Activated T-helper 1 cell treated with anti-CD3 and anti-CD28 coated beads, Interleukin-12 subunit alpha, Interleukin-12 subunit beta, Interleukin-2, Interleukin-4 antibody, amounts not matched to agents 30 ng/mL and 10 ng/mL and 1 ng/mL, durations not matched to agents 14 hours and 24 hours and 36 hours (primary cell): ENCODE measurements at regions of chr9 and their contacts with region 1.

Region 1: GRCh38 chr9:70413798-70414775 is at the start of gene KLF9:
- DNase-seq: peak; percentile 91
- H3K4me3 Mint-ChIP-seq: peak within 1 kb of the TSS; percentile 98
- H3K27ac Mint-ChIP-seq: peak within 1 kb of the TSS; percentile 100
- H3K4me1 Mint-ChIP-seq: peaks cover 42% of the 10 kb centered on the region
- H3K27me3 Mint-ChIP-seq: no peaks in the 10 kb centered on the region
- total RNA-seq, gene KLF9: 18.1 and 19.0 TPM in 2 replicates

Region 2: GRCh38 chr9:69174616-69175463 is 1239.2 kb before region 1 on chr9:
- intact Hi-C with region 1: loop called (anchors 5 kb)
- DNase-seq: peak; percentile 21
- H3K4me3 Mint-ChIP-seq: peak overlapping the region; percentile 82
- H3K27ac Mint-ChIP-seq: peak overlapping the region; percentile 69
- H3K4me1 Mint-ChIP-seq: peaks cover 70% of the 10 kb centered on the region
- H3K27me3 Mint-ChIP-seq: peaks cover 18% of the 10 kb centered on the region

Region 3: GRCh38 chr9:70020991-70021571 is 393.0 kb before region 1 on chr9:
- intact Hi-C with region 1: no loop called
- DNase-seq: no peak
- H3K4me3 Mint-ChIP-seq: no peak overlapping the region
- H3K27ac Mint-ChIP-seq: no peak overlapping the region
- H3K4me1 Mint-ChIP-seq: no peaks in the 10 kb centered on the region
- H3K27me3 Mint-ChIP-seq: peaks cover 3% of the 10 kb centered on the region

Region 4: DNA sequence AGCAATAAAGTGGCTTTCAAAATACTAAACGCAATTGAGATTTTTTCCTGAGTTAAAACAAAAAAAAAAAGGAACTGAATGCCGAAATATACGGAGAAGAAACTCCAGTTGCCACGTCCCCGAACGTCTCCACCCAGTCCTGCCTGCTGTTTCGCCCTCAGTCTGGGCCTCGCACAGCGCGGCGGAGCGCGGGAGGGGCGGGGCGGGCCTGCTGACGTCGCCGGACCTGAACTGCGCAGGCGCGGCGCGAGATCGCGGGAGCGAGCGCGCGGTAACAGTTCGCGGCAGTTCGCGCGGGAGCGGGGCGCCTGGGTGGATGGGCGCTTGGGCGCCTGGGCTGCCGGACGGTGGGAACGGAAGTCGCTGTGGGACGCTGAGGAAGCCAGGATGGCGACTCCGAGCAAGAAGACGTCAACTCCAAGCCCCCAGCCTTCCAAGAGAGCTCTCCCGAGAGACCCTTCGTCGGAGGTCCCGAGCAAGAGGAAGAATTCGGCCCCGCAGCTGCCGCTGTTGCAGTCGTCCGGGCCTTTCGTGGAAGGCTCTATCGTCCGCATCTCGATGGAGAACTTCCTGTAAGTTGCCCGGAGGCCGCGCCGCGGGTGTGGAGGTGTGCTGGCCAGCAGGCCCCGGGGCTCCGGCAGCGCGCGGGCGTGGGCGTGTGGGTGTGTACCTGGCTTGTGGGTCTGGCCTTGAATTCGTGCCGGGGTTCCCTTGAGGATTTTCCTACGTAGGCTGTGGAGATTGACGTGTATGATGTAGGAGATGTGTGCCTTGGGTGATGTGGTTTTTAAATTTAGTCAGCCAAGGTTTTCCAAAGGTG is 155.2 kb before region 1 on chr9 and contains the start of gene SMC5:
- intact Hi-C with region 1: loop called (anchors 1 kb)
- DNase-seq: peak; percentile 90
- H3K4me3 Mint-ChIP-seq: peak within 1 kb of the TSS; percentile 99
- H3K27ac Mint-ChIP-seq: peak within 1 kb of the TSS; percentile 95
- H3K4me1 Mint-ChIP-seq: peaks cover 49% of the 10 kb centered on the region
- H3K27me3 Mint-ChIP-seq: peaks cover 7% of the 10 kb centered on the region
- total RNA-seq, gene SMC5: 49.5 and 53.6 TPM in 2 replicates

Region 5: GRCh38 chr9:70466976-70467561 is 53.0 kb after region 1 on chr9:
- intact Hi-C with region 1: loop called (anchors 2 kb)
- DNase-seq: no peak
- H3K4me3 Mint-ChIP-seq: no peak overlapping the region
- H3K27ac Mint-ChIP-seq: peak overlapping the region; percentile 47
- H3K4me1 Mint-ChIP-seq: peaks cover 48% of the 10 kb centered on the region
- H3K27me3 Mint-ChIP-seq: no peaks in the 10 kb centered on the region

Region 6: DNA sequence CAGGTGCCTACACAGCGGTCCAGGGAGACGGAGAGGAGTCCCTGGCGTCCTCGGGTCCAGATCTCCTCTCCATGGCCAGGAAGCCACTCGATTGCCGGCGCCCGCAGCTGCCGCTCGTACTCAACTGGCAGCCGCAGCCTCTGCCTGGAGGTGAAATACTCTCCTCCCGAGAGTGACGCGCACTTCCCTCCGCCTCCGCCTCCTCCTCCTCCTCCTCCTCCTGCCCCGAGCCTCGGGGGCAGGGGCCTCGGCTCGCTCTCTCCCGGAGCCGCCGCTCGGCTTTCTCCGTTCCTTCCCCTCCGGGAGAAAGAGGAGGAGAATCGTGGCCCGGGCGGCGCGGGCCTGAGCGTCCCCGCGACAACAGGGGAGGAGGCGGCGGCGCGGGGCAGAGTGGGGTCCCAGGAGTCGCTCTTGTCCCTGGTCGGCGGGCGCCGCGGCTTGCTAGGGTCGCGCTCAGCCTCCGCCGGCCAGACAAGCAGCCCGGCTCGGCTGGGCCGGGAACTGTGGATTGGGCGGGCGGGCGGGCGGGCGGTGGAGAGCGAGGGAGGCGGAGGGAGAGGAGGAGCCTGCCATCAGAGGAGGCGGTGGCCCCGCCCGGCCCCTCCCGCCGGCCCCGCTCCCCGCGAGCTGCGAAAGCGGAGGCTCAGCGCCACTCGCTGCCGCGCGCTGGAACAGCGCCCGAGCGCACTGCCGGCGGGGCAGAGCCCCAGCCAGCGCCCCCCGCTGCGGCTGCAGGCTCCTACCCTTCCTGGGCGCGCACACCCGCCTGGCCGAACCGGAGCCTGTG is 1354.5 kb after region 1 on chr9 and contains the start of gene CEMIP2:
- intact Hi-C with region 1: loop called (anchors 5 kb)
- DNase-seq: peak; percentile 84
- H3K4me3 Mint-ChIP-seq: peak within 1 kb of the TSS; percentile 96
- H3K27ac Mint-ChIP-seq: peak within 1 kb of the TSS; percentile 92
- H3K4me1 Mint-ChIP-seq: peaks cover 48% of the 10 kb centered on the region
- H3K27me3 Mint-ChIP-seq: no peaks in the 10 kb centered on the region
- total RNA-seq, gene CEMIP2: 70.0 and 79.1 TPM in 2 replicates

Region 7: DNA sequence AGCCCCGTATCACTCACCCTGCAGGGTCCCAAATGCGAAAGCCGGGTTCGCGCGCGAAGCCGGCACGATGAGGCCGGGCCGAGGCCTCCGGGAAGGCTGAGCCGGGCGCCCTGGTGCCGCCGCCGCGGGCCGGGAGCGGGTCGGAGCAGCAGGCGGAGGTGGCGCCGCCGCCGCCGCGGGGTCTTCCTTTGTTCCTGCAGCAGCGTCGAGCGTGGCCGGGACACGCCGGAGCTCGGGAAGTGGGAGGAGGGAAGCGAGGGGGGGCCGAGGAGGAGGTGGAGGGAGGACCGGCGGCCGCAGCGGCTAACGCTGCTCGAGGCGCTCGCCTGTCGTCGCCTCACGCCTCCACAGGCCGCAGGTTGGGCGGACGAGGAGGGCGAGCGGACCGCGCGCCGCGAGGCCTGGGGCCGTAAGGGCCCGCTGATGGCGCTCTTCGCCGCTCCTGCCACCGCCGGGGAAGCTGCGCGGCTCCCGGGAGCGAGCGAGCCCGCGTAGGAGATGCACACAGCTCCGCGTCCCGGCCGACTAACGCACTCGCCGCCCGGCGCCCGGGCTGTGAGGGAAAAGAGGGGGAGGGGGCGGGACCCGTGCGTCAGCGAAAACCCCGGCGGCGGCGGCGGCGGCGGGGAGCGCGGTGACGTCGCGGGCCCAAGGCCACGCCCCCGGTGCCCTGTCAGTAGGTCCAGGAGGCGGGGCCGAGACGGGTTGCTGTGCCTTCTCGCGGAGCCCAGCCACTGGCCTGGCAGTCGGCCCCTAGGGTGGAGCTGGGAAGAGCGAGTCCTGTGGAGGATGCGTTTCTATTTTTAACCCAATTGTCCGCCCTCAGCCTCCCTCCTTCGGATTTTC is 1950.8 kb after region 1 on chr9 and contains the start of gene ZFAND5:
- intact Hi-C with region 1: loop called (anchors 5 kb)
- DNase-seq: peak; percentile 89
- H3K4me3 Mint-ChIP-seq: peak within 1 kb of the TSS; percentile 97
- H3K27ac Mint-ChIP-seq: peak within 1 kb of the TSS; percentile 97
- H3K4me1 Mint-ChIP-seq: peaks cover 42% of the 10 kb centered on the region
- H3K27me3 Mint-ChIP-seq: no peaks in the 10 kb centered on the region
- total RNA-seq, gene ZFAND5: 131 and 133 TPM in 2 replicates